ENCODE measurements at regions of chr6 and their contacts with region 1.

Region 1: GRCh38 chr6:125995972-125996580 is 9.7 kb downstream of the TRMT11 start:
- DNase-seq: peak; percentile 67
- H3K4me3 ChIP-seq: peak overlapping the region in 1 of 4 donors; percentile 4
- H3K27ac ChIP-seq: no peak overlapping the region
- H3K4me1 ChIP-seq: peaks cover 0 to 28% (median 9%) of the 10 kb centered on the region in 4 donors
- H3K27me3 ChIP-seq: no peaks in the 10 kb centered on the region
- CTCF ChIP-seq: peak; percentile 85 to 97 (median 93)
- EP300 ChIP-seq: no peak
- POLR2A ChIP-seq: no peak

Region 2: GRCh38 chr6:124888581-124889371 is 1107.3 kb before region 1 on chr6:
- in situ Hi-C with region 1: no loop called
- intact Hi-C with region 1: no loop called
- DNase-seq: no peak
- H3K4me3 ChIP-seq: no peak overlapping the region
- H3K27ac ChIP-seq: no peak overlapping the region
- H3K4me1 ChIP-seq: peaks cover 0 to 6% (median 0%) of the 10 kb centered on the region in 4 donors
- H3K27me3 ChIP-seq: no peaks in the 10 kb centered on the region
- CTCF ChIP-seq: no peak
- EP300 ChIP-seq: no peak
- POLR2A ChIP-seq: no peak

Region 3: DNA sequence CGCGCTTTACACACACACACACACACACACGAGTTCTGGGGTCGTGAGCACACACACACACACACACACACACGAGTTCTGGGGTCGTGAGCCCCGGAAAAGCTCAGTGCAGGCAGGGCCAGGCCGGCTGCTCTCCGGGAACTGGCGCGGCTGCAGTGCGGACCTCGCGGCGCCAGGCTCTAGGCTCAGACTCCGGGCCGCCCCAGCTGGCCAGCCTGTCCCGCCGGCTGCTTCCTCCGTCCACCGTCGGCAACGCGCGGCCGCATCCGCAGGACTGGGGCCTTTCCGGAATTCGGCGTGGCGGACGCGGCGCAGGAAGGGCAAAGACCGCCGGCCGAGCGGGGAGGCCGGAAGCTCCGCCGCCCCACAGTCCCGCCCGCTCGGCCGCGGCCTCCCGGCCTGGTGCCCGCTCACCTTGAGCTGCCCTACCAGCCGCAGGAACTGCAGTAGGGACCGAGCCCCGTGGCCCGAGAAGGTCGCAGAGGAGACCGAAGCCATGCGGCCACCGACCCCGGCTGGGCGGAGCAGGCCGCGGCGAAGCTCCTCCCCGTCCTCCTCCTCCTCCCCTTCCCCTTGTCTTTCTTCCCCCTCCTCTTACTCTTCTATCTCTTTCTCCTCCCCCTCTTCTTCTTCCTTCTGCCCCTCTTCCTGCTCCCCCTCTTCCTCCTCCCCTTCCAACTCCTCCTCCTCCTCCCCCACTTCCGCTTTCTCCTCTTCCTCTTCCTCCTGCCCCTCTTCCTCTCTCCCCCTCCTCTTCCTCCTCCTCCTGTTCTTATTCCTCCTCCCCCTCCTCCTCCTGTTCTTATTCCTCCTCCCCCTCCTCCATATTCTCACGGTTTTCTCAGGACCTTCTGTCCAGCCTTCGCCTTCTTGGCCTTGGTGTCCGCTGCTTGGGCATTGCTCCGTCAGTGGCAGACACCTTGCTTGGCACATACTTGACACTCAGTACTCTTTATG is 694.4 kb before region 1 on chr6 and contains the start of gene HDDC2:
- in situ Hi-C with region 1: loop called in 1 of 4 experiments (anchors 10 kb)
- intact Hi-C with region 1: no loop called
- DNase-seq: peak; percentile 75
- H3K4me3 ChIP-seq: peak within 1 kb of the TSS; percentile 49 to 89 (median 70)
- H3K27ac ChIP-seq: peak within 1 kb of the TSS; percentile 79 to 93 (median 90)
- H3K4me1 ChIP-seq: peaks cover 0 to 21% (median 11%) of the 10 kb centered on the region in 4 donors
- H3K27me3 ChIP-seq: no peaks in the 10 kb centered on the region
- CTCF ChIP-seq: peak in 1 of 5 experiments; percentile 22
- EP300 ChIP-seq: no peak
- POLR2A ChIP-seq: peak; percentile 67
- total RNA-seq, gene HDDC2: 7.2 to 42.4 (median 25.7) TPM

Region 4: GRCh38 chr6:126007800-126008199 is 11.7 kb after region 1 on chr6:
- in situ Hi-C with region 1: no loop called
- intact Hi-C with region 1: loop called (anchors 1 kb)
- DNase-seq: no peak
- H3K4me3 ChIP-seq: no peak overlapping the region
- H3K27ac ChIP-seq: no peak overlapping the region
- H3K4me1 ChIP-seq: no peaks in the 10 kb centered on the region
- H3K27me3 ChIP-seq: no peaks in the 10 kb centered on the region
- CTCF ChIP-seq: no peak
- EP300 ChIP-seq: no peak
- POLR2A ChIP-seq: no peak